A549 (cell line): ENCODE measurements at regions of chr10 and their contacts with region 1.

Region 1: DNA sequence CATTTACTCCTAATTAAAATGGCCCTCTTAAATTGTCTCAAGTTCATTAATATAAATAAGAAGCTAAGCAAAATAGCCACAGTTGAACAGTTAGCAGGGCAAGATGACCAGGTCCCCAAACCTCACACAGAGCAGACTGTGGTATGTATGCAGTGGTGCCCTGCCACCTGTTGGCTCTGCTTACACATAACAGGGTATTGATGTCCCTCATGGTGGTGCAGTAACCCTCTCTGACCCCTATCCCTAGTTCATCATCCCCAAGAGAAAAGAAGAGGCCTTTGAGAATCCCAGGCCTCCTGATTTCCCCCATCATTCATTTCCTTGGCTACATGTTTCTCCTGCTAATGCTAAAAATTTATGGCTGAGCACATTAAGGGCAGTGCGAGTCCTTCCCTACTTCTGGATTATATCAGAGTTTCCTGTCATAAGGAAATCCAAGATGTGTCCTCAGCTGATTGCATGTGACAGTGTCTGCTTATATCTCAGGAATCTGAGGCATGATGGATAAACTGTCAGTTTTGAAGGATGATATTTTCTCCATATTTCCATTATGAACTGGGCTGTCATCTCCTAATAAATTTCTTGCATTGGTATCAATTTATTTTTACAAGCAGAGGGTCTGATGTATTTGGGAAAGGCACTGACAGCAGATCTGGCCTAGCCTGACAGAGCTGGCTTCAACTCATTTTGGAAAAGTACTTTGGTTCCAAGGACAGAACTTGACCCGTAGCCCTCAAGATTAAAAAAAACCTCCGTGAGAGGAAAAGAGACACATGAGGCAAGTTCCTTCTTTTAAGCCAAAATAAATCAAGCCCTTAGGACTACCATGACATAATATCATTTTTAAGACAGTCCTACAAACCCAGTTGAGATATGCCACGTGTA is 880.6 kb downstream of the LRMDA start:
- DNase-seq: peak; percentile 56 to 58
- ATAC-seq: peak; percentile 99 to 100
- H3K4me3 ChIP-seq: no peak overlapping the region
- H3K27ac ChIP-seq: no peak overlapping the region
- H3K4me1 ChIP-seq: no peaks in the 10 kb centered on the region
- CTCF ChIP-seq: peak; percentile 52
- EP300 ChIP-seq: no peak
- POLR2A ChIP-seq: no peak
- RAD21 ChIP-seq: peak; percentile 62 to 69

Region 2: GRCh38 chr10:76324283-76324682 is 12.3 kb after region 1 on chr10:
- CTCF ChIA-PET with region 1: interaction called, 11 read pairs
- POLR2A ChIA-PET with region 1: no interaction called
- DNase-seq: no peak
- ATAC-seq: no peak
- H3K4me3 ChIP-seq: no peak overlapping the region
- H3K27ac ChIP-seq: no peak overlapping the region
- H3K4me1 ChIP-seq: peaks cover 2% of the 10 kb centered on the region; the same call in 2 of the 3 replicates
- CTCF ChIP-seq: no peak
- EP300 ChIP-seq: no peak
- POLR2A ChIP-seq: no peak
- RAD21 ChIP-seq: no peak

Region 3: GRCh38 chr10:76352300-76352699 is 40.3 kb after region 1 on chr10:
- CTCF ChIA-PET with region 1: no interaction called
- POLR2A ChIA-PET with region 1: no interaction called
- DNase-seq: peak in 1 of 2 experiments; percentile 62
- ATAC-seq: peak; percentile 87 to 89
- H3K4me3 ChIP-seq: no peak overlapping the region
- H3K27ac ChIP-seq: peak overlapping the region; percentile 57 to 65; a peak in 5 of 6 replicates
- H3K4me1 ChIP-seq: peaks cover 13% of the 10 kb centered on the region
- CTCF ChIP-seq: no peak
- EP300 ChIP-seq: no peak
- POLR2A ChIP-seq: no peak
- RAD21 ChIP-seq: no peak